AG04449 (cell line): ENCODE measurements at regions of chr7 and their contacts with region 1.

Region 1: DNA sequence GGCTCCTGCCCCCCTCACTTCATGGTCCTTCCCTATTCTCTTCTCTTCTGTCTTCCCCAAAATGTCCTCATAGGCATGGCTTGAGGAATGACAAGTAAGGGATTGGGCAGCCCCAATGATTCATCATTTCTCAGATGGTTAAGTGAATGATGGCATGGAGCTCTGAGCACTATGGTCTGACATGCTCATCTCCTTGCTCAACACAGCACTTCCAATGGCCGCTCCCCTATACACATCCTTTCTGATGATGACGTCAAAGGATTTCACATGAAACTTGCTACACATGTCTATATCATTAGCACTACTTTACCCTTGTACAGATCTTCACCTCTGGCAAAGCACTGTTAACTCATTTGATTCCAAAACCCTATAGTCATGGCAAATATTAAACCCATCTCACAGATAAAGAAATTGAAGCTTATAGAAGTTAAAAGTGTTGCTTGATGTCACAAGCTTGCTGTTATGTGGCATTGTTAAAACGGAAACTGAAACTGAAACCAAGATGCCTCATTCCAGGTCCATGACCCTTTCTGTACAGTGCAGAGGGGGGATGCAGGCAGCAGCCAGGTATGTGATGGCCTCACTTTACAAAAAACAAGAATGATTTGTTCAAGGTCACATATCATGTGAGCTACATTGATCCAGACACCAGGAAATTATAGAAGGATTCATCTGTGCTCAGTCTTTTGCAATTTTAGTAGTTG is 90.0 kb upstream of the PLXNA4 start:
- DNase-seq: no peak
- H3K4me3 ChIP-seq: no peak overlapping the region
- CTCF ChIP-seq: no peak

Region 2: GRCh38 chr7:132580717-132581285 is 85.4 kb before region 1 on chr7:
- CTCF ChIA-PET with region 1: no interaction called
- POLR2A ChIA-PET with region 1: no interaction called
- DNase-seq: peak; percentile 21
- H3K4me3 ChIP-seq: no peak overlapping the region
- CTCF ChIP-seq: peak; percentile 81

Region 3: DNA sequence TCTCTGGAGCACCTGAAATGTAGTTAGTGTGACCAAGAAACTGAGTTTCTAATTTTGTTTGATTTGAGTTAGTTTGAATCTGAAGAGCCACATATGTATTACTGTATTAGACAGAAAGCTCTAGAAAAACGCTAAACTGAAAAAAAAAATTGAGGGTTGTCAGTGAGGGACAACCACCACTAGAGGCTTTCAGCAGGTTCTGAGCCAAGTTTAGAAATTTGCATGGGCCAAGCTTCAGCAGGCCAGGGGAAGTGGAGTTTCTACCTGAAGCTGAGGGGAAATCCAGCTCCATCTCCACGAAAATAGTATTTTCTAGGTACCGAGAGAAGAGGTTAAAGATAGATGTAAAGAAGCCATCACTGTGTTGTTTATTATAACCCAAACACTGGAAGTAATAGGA is 12.1 kb before region 1 on chr7:
- CTCF ChIA-PET with region 1: interaction called, 21 read pairs
- POLR2A ChIA-PET with region 1: no interaction called
- DNase-seq: no peak
- H3K4me3 ChIP-seq: no peak overlapping the region
- CTCF ChIP-seq: no peak